Activated naive CD4-positive, alpha-beta T cell treated with anti-CD3 and anti-CD28 coated beads for 36 hours (primary cell): ENCODE measurements at regions of chr1 and their contacts with region 1.

Region 1: GRCh38 chr1:9784508-9785133 is 39.1 kb downstream of the CLSTN1 start:
- DNase-seq: peak; percentile 85
- H3K4me3 Mint-ChIP-seq: no peak overlapping the region
- H3K27ac Mint-ChIP-seq: no peak overlapping the region
- H3K4me1 Mint-ChIP-seq: peaks cover 34% of the 10 kb centered on the region
- H3K27me3 Mint-ChIP-seq: no peaks in the 10 kb centered on the region

Region 2: DNA sequence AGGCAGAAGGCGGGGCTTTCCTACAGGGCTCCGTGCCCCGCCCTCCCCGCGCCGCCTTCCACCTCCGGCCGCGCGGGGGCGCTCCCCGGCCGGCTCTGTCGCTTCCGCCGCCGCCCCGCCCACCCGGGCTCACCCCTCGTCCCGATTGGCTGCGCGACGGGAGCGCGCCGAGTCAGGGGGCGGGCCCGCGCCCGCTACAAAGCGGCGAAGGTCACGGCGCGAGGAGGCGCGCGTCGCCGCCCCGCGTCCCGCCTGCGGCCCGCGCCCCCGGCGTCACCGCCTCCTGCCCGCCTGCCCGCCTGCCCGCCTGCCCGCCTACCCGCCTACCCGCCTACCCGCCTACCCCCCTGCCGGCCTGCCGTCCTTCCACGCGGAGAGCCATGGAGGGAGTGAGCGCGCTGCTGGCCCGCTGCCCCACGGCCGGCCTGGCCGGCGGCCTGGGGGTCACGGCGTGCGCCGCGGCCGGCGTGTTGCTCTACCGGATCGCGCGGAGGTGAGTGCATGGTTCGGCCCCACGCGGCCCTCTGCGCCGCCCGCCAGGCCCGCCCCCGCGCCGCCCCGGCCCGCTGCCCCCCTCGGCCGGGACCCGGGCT is 196.0 kb before region 1 on chr1 and contains the start of gene TMEM201:
- CTCF ChIA-PET with region 1: no interaction called
- intact Hi-C with region 1: loop called (anchors 1 kb)
- DNase-seq: peak; percentile 92
- H3K4me3 Mint-ChIP-seq: peak within 1 kb of the TSS; percentile 78
- H3K27ac Mint-ChIP-seq: no peak within 1 kb of the TSS
- H3K4me1 Mint-ChIP-seq: peaks cover 38% of the 10 kb centered on the region
- H3K27me3 Mint-ChIP-seq: no peaks in the 10 kb centered on the region
- total RNA-seq, gene TMEM201: 9.1 to 9.8 TPM

Region 3: GRCh38 chr1:9724706-9725476 is 59.7 kb before region 1 on chr1:
- CTCF ChIA-PET with region 1: interaction called, 5 read pairs
- intact Hi-C with region 1: loop called (anchors 1 kb)
- DNase-seq: peak; percentile 78
- H3K4me3 Mint-ChIP-seq: no peak overlapping the region
- H3K27ac Mint-ChIP-seq: no peak overlapping the region
- H3K4me1 Mint-ChIP-seq: peaks cover 64% of the 10 kb centered on the region
- H3K27me3 Mint-ChIP-seq: no peaks in the 10 kb centered on the region

Region 4: GRCh38 chr1:9823943-9824701 is 39.5 kb after region 1 on chr1 and contains the start of gene CLSTN1:
- CTCF ChIA-PET with region 1: interaction called, 9 read pairs
- intact Hi-C with region 1: loop called (anchors 1 kb)
- DNase-seq: peak; percentile 91
- H3K4me3 Mint-ChIP-seq: peak within 1 kb of the TSS; percentile 94
- H3K27ac Mint-ChIP-seq: peak within 1 kb of the TSS; percentile 8
- H3K4me1 Mint-ChIP-seq: peaks cover 41% of the 10 kb centered on the region
- H3K27me3 Mint-ChIP-seq: peaks cover 14% of the 10 kb centered on the region
- total RNA-seq, gene CLSTN1: 24.0 to 24.9 TPM

Region 5: DNA sequence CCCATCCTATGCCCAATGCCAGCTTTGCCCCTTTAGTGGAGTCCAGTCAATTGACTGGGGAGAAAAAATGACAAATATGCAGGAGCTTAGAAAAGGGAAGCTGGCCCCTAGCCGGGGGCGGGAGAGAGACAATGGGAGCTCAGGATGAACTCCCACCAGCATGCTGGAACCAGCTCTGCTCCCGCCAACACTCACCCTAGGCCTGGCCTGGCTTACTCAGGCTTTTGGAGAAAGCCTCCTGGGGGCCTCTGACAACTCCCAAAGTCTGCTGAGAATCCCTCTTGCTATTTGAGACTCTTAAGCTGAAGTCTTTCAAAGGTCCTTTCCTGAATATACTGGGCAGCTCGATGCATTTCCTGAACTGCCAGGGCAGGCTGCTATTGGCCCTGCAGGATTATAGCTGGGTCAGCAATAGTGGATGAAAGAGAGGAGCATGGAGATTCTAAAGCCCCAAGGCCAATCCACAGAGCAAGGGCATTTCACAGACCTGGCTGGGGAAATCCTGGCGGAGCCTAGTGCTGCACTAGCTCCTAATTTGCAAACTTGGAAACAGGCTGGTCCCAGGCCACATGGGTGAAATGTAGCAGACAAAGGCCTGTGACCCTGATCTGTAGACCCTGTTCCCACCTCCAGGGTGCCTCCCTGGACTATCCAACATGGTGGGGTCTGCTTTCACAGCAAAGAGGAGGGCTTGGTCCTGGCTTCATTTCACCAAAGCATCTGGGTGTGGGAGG is 74.8 kb after region 1 on chr1:
- CTCF ChIA-PET with region 1: interaction called, 178 read pairs
- intact Hi-C with region 1: loop called (anchors 2 kb)
- DNase-seq: no peak
- H3K4me3 Mint-ChIP-seq: no peak overlapping the region
- H3K27ac Mint-ChIP-seq: no peak overlapping the region
- H3K4me1 Mint-ChIP-seq: peaks cover 10% of the 10 kb centered on the region
- H3K27me3 Mint-ChIP-seq: no peaks in the 10 kb centered on the region

Region 6: DNA sequence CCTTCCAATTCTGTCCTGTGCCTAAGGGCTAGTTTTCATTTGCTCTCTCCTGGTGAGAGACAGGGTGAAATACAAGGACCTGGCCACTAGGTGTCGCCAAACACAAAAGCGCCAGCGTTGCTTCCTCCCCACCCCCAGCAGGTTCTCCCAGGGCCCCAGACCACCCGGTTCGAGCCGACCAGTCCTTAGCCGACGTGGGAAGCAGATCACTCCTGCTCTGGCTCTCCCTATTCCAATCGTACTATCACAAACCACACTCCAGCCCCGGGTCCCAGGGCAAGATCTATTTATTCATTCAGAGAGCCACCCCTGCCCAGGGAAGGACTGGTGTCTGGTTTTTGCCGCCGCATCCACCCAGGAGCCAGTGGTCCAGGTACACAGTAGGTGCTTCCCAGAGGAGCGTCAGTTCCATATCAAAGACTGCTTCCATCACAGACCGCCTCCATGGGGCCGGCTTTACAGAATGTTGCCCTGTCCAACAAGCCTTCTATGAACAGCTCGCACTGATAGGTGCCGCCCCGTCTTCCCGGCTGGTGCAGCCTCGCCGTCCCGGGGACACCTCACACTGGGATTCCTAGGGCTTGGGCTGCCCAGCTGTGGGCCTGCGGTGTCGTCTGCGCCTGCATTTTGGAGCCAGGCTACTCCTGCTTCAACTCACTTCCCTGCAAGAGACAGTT is 90.5 kb after region 1 on chr1:
- CTCF ChIA-PET with region 1: interaction called, 36 read pairs
- intact Hi-C with region 1: no loop called
- DNase-seq: peak; percentile 84
- H3K4me3 Mint-ChIP-seq: no peak overlapping the region
- H3K27ac Mint-ChIP-seq: no peak overlapping the region
- H3K4me1 Mint-ChIP-seq: no peaks in the 10 kb centered on the region
- H3K27me3 Mint-ChIP-seq: no peaks in the 10 kb centered on the region

Region 7: DNA sequence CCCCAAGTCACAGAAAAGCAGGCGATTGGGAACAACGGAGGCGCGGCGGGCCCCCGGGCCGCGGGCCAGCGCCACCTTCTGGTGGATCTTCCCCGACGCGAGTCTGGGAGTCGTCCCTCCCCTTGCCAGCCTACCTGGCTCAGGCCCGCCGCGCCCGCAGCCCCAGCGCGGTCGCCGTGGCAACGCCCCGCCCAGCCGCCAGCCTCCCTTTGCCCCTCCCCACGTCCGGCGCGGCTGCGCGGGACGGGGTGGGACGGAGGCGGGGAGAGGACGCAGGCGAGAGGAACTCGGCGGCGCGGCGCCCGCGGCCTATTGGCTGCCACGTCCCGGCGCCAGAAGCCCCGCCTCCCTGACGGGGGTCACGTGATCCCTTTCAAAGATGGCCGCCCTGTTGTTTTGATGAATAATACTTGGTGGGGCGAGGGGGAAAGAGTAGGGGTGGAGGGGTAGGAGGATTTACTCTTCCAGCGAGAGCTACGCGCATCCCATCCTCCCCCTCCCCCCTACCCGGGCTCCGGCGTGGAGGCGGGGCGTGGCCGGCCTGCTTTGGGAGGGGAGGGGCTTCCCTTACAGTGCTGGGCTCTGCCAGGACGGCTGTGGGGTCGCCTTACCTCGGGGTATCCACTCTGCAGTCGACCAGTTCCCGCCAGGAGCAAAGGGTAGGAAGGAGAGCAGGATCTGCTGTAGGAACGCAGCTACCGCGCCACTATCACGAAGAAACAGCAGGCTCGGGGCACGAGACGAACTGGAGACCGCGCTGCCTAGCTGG is 248.2 kb after region 1 on chr1 and contains the start of gene UBE4B:
- CTCF ChIA-PET with region 1: no interaction called
- intact Hi-C with region 1: loop called (anchors 5 kb)
- DNase-seq: peak; percentile 98
- H3K4me3 Mint-ChIP-seq: peak within 1 kb of the TSS; percentile 94
- H3K27ac Mint-ChIP-seq: peak within 1 kb of the TSS; percentile 88
- H3K4me1 Mint-ChIP-seq: peaks cover 24% of the 10 kb centered on the region
- H3K27me3 Mint-ChIP-seq: no peaks in the 10 kb centered on the region
- total RNA-seq, gene UBE4B: 20.1 to 21.3 TPM

Region 8: DNA sequence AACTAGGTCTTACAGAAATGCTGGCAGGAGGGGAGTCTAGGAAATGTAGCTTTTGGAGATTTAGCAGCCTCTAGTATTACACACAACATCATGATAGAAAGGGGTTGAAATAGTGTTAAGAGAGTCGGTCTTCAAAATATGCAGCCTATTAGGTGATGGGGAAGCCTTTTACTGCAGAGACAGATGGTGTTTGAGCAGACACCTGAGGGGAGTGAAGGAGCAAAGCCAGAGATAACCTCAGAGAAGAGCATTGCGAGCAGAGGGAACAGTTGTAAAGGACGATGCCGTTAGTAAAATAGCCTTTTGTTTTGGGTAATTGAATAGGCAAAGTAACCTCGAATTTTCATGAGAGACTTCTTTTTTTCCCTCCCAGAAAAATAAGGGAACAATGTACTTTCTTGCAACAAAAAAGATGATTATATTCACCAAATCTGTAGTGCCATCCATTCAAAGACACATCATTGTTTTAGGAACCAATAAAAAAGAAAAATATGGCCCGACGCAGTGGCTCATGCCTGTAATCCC is 359.4 kb after region 1 on chr1:
- CTCF ChIA-PET with region 1: no interaction called
- intact Hi-C with region 1: no loop called
- DNase-seq: no peak
- H3K4me3 Mint-ChIP-seq: no peak overlapping the region
- H3K27ac Mint-ChIP-seq: no peak overlapping the region
- H3K4me1 Mint-ChIP-seq: no peaks in the 10 kb centered on the region
- H3K27me3 Mint-ChIP-seq: no peaks in the 10 kb centered on the region